Activated CD4-positive, alpha-beta T cell treated with anti-CD3 and anti-CD28 coated beads, Interleukin-2, amount 10 ng/mL, durations not matched to agents 24 days and 14 days (primary cell): ENCODE measurements at regions of chr1 and their contacts with region 1.

Region 1: DNA sequence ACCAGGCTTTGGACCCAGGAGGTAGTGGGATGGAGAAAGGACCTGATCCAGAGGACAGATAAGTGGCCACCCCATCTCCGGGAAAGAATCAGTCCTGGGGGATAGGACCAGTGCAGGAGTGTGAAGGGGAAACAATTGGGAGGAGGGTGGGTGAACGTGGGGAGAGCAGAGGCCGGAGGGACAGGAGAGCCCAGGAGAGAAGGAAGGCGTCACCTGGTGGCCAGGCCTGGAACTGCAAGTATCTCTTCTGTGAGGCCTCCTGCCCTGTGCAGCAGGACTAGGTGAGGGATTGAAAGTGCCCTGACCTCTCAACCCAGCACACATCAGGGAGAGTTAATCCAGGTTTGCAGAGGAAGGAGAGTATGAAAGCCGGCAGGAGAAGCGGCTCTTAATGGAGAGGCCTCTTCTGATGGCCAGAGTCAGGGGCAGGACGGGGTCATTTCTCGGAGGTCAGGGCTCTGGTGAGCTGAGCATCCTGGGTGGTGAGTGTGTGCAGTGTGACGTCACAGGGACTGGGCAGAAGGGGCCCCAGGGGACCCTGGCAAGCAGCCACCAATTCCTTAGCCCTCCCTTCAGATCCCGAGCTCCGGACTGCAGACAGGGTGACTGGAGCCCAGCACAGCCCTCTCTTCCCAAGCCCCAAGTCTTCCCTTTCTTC is 9.2 kb upstream of the LAD1 start:
- DNase-seq: peak; percentile 91
- H3K4me3 Mint-ChIP-seq: no peak overlapping the region
- H3K27ac Mint-ChIP-seq: no peak overlapping the region
- H3K4me1 Mint-ChIP-seq: no peaks in the 10 kb centered on the region
- H3K27me3 Mint-ChIP-seq: peaks cover 3% of the 10 kb centered on the region

Region 2: GRCh38 chr1:201254625-201255506 is 153.4 kb before region 1 on chr1:
- intact Hi-C with region 1: loop called (anchors 2 kb)
- DNase-seq: peak; percentile 90
- H3K4me3 Mint-ChIP-seq: no peak overlapping the region
- H3K27ac Mint-ChIP-seq: no peak overlapping the region
- H3K4me1 Mint-ChIP-seq: no peaks in the 10 kb centered on the region
- H3K27me3 Mint-ChIP-seq: no peaks in the 10 kb centered on the region

Region 3: GRCh38 chr1:201348211-201348566 is 60.1 kb before region 1 on chr1:
- intact Hi-C with region 1: loop called (anchors 5 kb)
- DNase-seq: peak; percentile 74
- H3K4me3 Mint-ChIP-seq: no peak overlapping the region
- H3K27ac Mint-ChIP-seq: no peak overlapping the region
- H3K4me1 Mint-ChIP-seq: no peaks in the 10 kb centered on the region
- H3K27me3 Mint-ChIP-seq: peaks cover 14% of the 10 kb centered on the region